Aorta (tissue), 5 donors: ENCODE measurements at regions of chr7 and their contacts with region 1.

Region 1: DNA sequence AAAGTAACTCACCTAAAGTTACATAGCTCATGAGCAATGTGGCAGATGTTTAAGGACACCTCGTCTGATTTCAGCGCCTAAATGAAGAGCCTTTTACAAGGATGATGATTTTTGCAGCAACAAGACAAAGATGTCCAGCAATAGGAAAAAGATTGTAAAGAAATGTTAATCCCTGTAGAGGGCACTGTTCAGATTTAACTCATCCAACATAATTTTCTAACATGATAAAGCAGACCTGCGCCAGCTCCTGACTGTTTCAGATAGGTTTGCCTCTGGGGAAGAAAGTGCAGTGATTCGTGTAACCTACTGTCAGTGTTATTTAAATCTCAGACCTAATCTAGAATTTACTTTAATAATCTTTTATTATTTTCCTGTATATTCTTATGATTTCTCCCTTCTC is 595.2 kb downstream of the AUTS2 start:
- DNase-seq: no peak
- ATAC-seq: no peak
- H3K4me3 ChIP-seq: no peak overlapping the region
- H3K27ac ChIP-seq: no peak overlapping the region
- H3K4me1 ChIP-seq: no peaks in the 10 kb centered on the region
- H3K27me3 ChIP-seq: no peaks in the 10 kb centered on the region

Region 2: DNA sequence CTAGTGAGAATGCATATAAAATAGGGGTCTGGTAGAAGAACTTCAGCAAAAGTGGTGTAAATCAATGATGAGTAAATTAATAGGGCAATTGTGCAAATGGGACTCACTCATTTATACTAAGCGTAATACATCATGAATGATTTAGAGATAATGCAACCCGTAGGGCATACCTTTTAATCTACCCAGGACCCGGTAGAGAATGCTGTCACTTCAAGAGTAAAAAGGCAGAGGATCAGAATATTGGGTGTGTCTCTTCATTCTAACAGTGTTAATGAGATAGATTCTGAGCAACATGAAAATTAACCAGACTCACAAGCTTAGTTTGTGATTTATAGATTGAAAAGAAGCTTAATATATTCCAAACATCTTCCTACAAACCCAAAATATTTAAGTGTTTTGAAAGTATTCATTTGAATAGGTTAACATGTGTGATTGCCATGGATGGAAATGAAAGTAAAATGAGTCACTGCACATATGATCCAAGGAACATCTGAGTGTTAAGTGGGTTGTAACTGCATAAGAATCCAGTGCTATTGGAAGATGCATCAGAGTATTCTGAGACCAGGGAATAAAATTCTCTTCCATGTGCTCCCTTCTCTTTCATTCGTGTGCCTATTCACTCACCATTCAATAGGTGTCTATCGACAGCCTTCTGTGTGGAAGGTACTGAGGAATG is 95.4 kb after region 1 on chr7:
- intact Hi-C with region 1: no loop called
- DNase-seq: no peak
- ATAC-seq: no peak
- H3K4me3 ChIP-seq: no peak overlapping the region
- H3K27ac ChIP-seq: no peak overlapping the region
- H3K4me1 ChIP-seq: no peaks in the 10 kb centered on the region
- H3K27me3 ChIP-seq: no peaks in the 10 kb centered on the region

Region 3: GRCh38 chr7:70384891-70385290 is 191.4 kb after region 1 on chr7:
- intact Hi-C with region 1: loop called in 1 of 2 experiments (anchors 10 kb)
- DNase-seq: no peak
- ATAC-seq: no peak
- H3K4me3 ChIP-seq: no peak overlapping the region
- H3K27ac ChIP-seq: peak overlapping the region in 1 of 2 donors; percentile 18
- H3K4me1 ChIP-seq: peaks cover 8 to 18% of the 10 kb centered on the region in 2 donors
- H3K27me3 ChIP-seq: no peaks in the 10 kb centered on the region

Region 4: GRCh38 chr7:70595753-70596597 is 402.5 kb after region 1 on chr7:
- intact Hi-C with region 1: loop called in 1 of 2 experiments (anchors 10 kb)
- DNase-seq: peak in 1 of 2 donors; percentile 76
- ATAC-seq: no peak
- H3K4me3 ChIP-seq: peak overlapping the region in 1 of 2 donors; percentile 33
- H3K27ac ChIP-seq: no peak overlapping the region
- H3K4me1 ChIP-seq: no peaks in the 10 kb centered on the region
- H3K27me3 ChIP-seq: no peaks in the 10 kb centered on the region